ENCODE measurements at regions of chr18 and their contacts with region 1.

Region 1: GRCh38 chr18:58314284-58314683 is 270.3 kb downstream of the NEDD4L start:
- DNase-seq: peak; percentile 66 to 68
- H3K4me3 ChIP-seq: no peak overlapping the region
- H3K27ac ChIP-seq: peak overlapping the region in 2 of 3 donors; percentile 52 to 64
- H3K4me1 ChIP-seq: peaks cover 44 to 67% of the 10 kb centered on the region in 2 donors
- H3K27me3 ChIP-seq: no peaks in the 10 kb centered on the region
- CTCF ChIP-seq: no peak
- POLR2A ChIP-seq: no peak

Region 2: GRCh38 chr18:58043491-58044379 is 270.5 kb before region 1 on chr18 and contains the start of gene NEDD4L:
- intact Hi-C with region 1: loop called (anchors 10 kb)
- DNase-seq: peak; percentile 90
- H3K4me3 ChIP-seq: peak within 1 kb of the TSS; percentile 67 to 98 (median 84)
- H3K27ac ChIP-seq: peak within 1 kb of the TSS; percentile 75 to 93 (median 88)
- H3K4me1 ChIP-seq: peaks cover 20 to 30% of the 10 kb centered on the region in 2 donors
- H3K27me3 ChIP-seq: no peaks in the 10 kb centered on the region
- CTCF ChIP-seq: peak; percentile 79 to 95 (median 85)
- POLR2A ChIP-seq: peak in 1 of 2 donors; percentile 74
- total RNA-seq, gene NEDD4L: 61.5 to 105 (median 78.0) TPM

Region 3: DNA sequence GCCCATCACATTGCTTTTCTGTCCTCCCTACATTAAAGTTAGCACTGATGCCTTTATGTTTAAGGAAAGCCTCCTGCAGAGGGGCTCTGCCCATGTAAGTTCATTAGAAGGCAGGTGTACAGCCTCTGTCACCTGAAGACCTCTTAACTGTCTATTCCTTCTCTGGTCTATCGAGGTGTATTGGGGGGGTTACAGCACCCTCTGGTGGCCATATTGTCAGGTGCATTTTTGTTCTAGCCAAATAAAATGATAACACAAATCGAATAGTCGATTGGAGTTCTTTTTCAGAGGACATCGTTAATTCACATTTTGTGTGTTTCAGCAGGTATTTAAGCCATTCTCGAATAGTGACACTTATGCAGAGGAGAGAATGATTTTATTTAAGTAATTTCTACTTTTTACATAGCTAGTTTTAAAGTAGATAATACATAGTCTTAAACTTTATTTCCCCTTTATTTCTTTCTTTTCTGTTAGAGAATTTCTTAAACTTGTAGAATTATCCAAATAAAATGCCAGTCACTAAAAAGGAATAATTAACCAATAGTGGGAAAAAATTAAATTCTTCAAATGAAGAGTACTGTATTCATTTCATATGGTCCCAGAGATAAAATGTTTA is 133.4 kb before region 1 on chr18:
- intact Hi-C with region 1: loop called (anchors 10 kb)
- DNase-seq: peak; percentile 63 to 71
- H3K4me3 ChIP-seq: no peak overlapping the region
- H3K27ac ChIP-seq: peak overlapping the region in 2 of 3 donors; percentile 14 to 74
- H3K4me1 ChIP-seq: peaks cover 40 to 66% of the 10 kb centered on the region in 2 donors
- H3K27me3 ChIP-seq: no peaks in the 10 kb centered on the region
- CTCF ChIP-seq: peak; percentile 72 to 87 (median 80)
- POLR2A ChIP-seq: no peak

Region 4: GRCh38 chr18:58263055-58263957 is 51.0 kb before region 1 on chr18:
- intact Hi-C with region 1: no loop called
- DNase-seq: peak in 1 of 2 donors; percentile 29
- H3K4me3 ChIP-seq: no peak overlapping the region
- H3K27ac ChIP-seq: peak overlapping the region; percentile 74 to 93 (median 89)
- H3K4me1 ChIP-seq: peaks cover 33 to 35% of the 10 kb centered on the region in 2 donors
- H3K27me3 ChIP-seq: no peaks in the 10 kb centered on the region
- CTCF ChIP-seq: no peak
- POLR2A ChIP-seq: peak in 1 of 2 donors; percentile 49